Naive thymus-derived CD4-positive, alpha-beta T cell (primary cell): ENCODE measurements at regions of chr1 and their contacts with region 1.

Region 1: DNA sequence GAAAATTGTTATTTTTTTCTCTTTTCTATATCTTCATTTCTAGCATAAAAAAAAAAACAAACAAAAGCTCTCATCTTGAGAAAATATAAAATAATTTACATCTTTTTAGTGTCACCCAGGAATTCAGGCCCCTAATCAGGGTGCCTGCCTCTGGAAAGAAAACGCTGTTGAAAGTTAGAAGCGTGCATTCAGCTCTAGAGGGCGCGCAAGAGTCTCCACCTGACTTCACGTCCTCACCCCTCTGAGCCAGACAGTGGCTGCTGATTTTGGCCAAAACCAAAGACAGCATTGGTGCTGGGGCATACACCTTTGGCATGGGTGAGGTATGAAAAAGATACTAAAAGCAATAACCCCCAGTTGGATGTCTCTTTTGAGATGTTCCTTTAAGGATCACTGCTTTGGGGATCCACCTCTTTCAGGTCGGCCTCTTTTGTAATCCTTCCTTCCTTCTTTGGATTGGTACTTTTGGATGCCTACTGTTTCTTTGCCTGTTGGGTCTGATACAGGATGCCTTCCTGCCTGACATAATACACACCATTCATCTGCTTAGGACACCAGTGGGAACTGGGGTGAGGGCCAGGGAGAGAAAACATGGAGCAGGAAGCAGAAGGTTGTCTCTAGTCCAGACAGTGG is 77.6 kb upstream of the CHRM3 start:
- DNase-seq: peak in 5 of 9 donors; percentile 3 to 19 (median 7)
- ATAC-seq: peak; percentile 51
- H3K4me3 ChIP-seq: no peak overlapping the region
- H3K4me3 Mint-ChIP-seq: no peak overlapping the region
- H3K27ac ChIP-seq: no peak overlapping the region
- H3K27ac Mint-ChIP-seq: no peak overlapping the region
- H3K4me1 ChIP-seq: no peaks in the 10 kb centered on the region
- H3K4me1 Mint-ChIP-seq: no peaks in the 10 kb centered on the region
- H3K27me3 ChIP-seq: no peaks in the 10 kb centered on the region
- H3K27me3 Mint-ChIP-seq: peaks cover 0 to 7% (median 0%) of the 10 kb centered on the region in 5 donors

Region 2: GRCh38 chr1:239976130-239976968 is 667.5 kb after region 1 on chr1:
- CTCF ChIA-PET with region 1: no interaction called
- POLR2A ChIA-PET with region 1: no interaction called
- intact Hi-C with region 1: loop called in 1 of 2 experiments (anchors 5 kb)
- DNase-seq: peak in 6 of 9 donors; percentile 16 to 42 (median 26)
- ATAC-seq: peak; percentile 74
- H3K4me3 ChIP-seq: no peak overlapping the region
- H3K4me3 Mint-ChIP-seq: no peak overlapping the region
- H3K27ac ChIP-seq: no peak overlapping the region
- H3K27ac Mint-ChIP-seq: no peak overlapping the region
- H3K4me1 ChIP-seq: no peaks in the 10 kb centered on the region
- H3K4me1 Mint-ChIP-seq: no peaks in the 10 kb centered on the region
- H3K27me3 ChIP-seq: no peaks in the 10 kb centered on the region
- H3K27me3 Mint-ChIP-seq: peaks cover 0 to 20% (median 8%) of the 10 kb centered on the region in 5 donors